ENCODE measurements at regions of chr1 and their contacts with region 1.

Region 1: GRCh38 chr1:6199298-6200187 is at the start of gene RPL22:
- DNase-seq: peak; percentile 95
- H3K4me3 ChIP-seq: peak within 1 kb of the TSS; percentile 98
- H3K27me3 ChIP-seq: no peaks in the 10 kb centered on the region
- CTCF ChIP-seq: no peak
- polyA plus RNA-seq, gene RPL22: 76.9 and 216 TPM in 2 replicates

Region 2: DNA sequence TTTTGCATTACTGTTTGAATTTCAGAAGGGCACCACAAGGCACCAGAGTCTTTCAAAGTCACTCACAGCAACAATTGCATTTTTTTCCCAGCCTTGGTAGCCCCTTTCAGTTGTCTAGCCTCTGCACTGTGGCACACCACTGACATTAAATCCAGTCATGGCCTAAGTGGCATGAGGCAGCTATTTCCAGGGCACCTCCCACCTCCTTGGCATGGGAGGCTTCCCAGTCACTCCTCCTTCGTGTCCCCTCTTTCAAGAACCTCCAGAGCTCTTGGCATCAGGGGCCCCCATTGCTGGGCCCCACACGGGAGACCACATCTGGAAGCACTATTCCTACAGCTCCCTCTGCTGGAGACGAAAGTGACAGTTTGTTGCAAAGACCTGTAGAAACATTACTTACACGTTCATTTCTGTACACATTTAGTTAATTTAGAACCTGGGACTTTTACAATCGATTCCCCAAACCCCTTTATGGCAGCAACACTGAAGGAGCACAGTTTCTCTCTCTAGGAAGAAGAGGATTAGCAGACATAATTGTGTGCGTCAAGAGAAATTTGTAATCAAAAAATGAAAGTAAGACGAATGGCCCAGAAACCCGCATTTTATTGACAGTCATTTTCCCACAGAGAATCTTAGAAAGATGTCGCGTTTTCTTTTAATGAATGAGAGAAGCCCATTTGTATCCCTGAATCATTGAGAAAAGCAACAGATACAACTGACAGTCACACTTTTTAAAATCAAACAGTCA is 13.7 kb before region 1 on chr1:
- CTCF ChIA-PET with region 1: interaction called, 17 read pairs
- POLR2A ChIA-PET with region 1: no interaction called
- DNase-seq: no peak
- H3K4me3 ChIP-seq: no peak overlapping the region
- H3K27me3 ChIP-seq: peaks cover under 1% of the 10 kb centered on the region; the same call in 1 of the 2 replicates
- CTCF ChIP-seq: peak; percentile 62